MCF 10A (cell line): ENCODE measurements at regions of chr4 and their contacts with region 1.

Region 1: DNA sequence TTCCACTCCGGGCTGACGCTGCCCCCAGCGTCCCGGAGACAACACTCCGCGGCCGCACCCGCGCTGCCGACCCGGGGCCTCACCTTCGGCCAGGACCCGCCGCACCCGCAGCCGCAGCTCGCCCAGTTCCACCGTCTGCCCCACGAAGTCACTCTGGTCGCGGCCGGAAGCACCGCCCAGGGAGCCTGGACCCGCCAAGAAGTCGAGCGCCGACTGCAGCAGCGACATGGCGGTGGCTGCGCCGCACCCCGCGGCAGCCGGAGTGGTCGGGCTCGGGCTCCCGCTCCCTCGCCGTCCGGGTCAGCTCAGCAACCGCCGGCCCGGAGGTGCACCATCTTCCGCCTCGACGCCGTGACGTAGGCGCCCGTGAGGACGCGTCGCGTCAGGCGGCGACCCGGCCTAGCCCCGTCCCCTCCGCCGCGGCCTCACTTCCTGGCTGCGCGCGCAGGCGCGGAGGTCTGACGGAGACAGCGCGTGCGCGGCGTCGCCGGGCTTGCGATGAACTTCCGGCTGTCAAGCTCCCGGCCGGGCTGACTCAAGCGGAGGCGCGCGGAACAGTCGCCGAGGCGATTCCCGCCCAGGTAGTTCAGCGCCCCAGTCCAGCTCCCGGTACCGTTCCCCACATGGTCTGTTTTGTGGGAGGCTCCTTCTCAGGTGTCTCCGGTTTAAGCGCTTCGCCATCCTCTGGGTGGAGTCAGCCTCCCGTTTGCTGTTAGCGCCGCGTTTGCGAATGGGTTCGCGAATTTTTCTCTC is at the starts of genes GAK and TMEM175:
- DNase-seq: peak; percentile 95
- H3K4me3 Mint-ChIP-seq: peak within 1 kb of the TSS; percentile 93
- H3K27ac Mint-ChIP-seq: peak within 1 kb of the TSS; percentile 93
- H3K4me1 Mint-ChIP-seq: peaks cover 31% of the 10 kb centered on the region
- H3K27me3 Mint-ChIP-seq: no peaks in the 10 kb centered on the region
- CTCF ChIP-seq: no peak
- total RNA-seq, gene GAK: 70.4 and 72.9 TPM in 2 replicates
- total RNA-seq, gene TMEM175: 22.5 and 28.9 TPM in 2 replicates

Region 2: DNA sequence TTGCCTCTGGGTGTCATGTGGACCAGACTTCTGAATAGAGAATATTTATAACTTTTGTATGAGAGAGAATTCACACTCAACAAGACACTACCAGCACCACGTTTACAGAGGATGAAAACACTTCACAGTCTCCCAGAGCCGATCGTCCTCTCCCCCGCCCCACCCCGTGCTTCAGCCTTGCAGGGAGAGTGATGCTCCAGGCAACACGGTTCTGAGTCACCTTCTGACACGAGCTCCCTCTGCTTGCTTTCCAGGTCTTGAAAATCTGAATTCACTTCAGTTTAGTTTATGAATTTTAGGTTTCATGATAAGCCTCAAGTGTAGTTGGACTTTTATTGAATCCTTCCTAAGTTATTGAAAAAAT is 166.0 kb before region 1 on chr4:
- CTCF ChIA-PET with region 1: no interaction called
- POLR2A ChIA-PET with region 1: interaction called, 14 read pairs
- intact Hi-C with region 1: loop called (anchors 5 kb)
- DNase-seq: peak; percentile 81
- H3K4me3 Mint-ChIP-seq: no peak overlapping the region
- H3K27ac Mint-ChIP-seq: peak overlapping the region; percentile 49
- H3K4me1 Mint-ChIP-seq: peaks cover 18% of the 10 kb centered on the region
- H3K27me3 Mint-ChIP-seq: no peaks in the 10 kb centered on the region
- CTCF ChIP-seq: no peak

Region 3: GRCh38 chr4:781493-782216 is 150.5 kb before region 1 on chr4:
- CTCF ChIA-PET with region 1: no interaction called
- POLR2A ChIA-PET with region 1: interaction called, 16 read pairs
- intact Hi-C with region 1: no loop called
- DNase-seq: peak; percentile 99
- H3K4me3 Mint-ChIP-seq: peak overlapping the region; percentile 81
- H3K27ac Mint-ChIP-seq: peak overlapping the region; percentile 94
- H3K4me1 Mint-ChIP-seq: peaks cover 19% of the 10 kb centered on the region
- H3K27me3 Mint-ChIP-seq: no peaks in the 10 kb centered on the region
- CTCF ChIP-seq: no peak

Region 4: DNA sequence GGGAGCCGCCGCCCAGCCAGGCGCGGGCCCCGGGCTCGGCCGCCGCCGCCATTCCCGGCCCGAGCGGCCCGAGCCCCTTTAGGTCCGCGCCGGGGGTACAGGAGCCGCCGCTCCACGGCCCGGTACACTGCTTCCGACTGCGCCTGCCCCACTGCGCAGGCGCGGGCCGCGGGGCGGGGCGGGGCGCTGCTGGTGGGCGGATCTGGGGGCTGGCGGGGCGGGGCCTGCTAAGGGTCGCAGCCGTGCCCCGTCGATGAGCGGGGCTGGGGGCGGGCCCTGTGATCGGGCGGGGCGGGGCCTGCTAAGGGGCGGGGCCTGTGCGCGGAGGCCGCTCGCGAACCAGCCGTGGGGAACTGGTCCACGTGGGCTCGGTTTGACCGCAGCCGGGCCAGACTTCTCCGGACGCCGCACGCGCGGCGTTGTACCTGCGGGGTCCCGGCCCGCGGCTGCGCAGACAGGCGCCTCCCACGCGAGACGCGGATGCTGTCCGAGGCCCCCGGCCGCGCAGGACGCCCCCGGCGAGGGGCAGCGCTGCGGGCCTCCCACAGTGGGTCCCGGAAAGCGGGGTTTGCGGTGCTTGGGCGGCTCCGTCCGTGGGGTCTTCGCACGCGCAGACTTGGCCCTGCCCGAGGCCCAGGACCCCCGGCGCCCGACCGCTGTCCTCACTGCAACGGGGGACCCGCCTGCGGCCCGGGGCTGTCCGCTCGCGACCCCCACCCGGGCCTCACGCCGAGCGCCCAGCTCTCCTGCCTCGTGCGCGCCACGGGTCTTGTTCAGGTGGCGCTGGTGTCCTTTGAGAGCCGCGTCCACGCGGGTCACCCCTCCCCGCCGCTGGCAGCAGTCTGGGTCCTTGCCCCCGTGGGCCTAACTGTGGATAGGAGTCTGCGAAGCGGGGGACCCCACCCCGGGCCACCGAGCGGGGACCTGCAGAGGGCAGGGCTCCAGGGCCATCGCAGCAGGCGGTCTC is 41.6 kb after region 1 on chr4 and contains the start of gene DGKQ:
- CTCF ChIA-PET with region 1: no interaction called
- POLR2A ChIA-PET with region 1: interaction called, 10 read pairs
- intact Hi-C with region 1: no loop called
- DNase-seq: peak; percentile 83
- H3K4me3 Mint-ChIP-seq: peak within 1 kb of the TSS; percentile 66
- H3K27ac Mint-ChIP-seq: no peak within 1 kb of the TSS
- H3K4me1 Mint-ChIP-seq: peaks cover 5% of the 10 kb centered on the region
- H3K27me3 Mint-ChIP-seq: no peaks in the 10 kb centered on the region
- CTCF ChIP-seq: no peak
- total RNA-seq, gene DGKQ: 15.9 and 17.4 TPM in 2 replicates

Region 5: GRCh38 chr4:986879-987623 is 54.9 kb after region 1 on chr4 and contains the start of gene IDUA:
- CTCF ChIA-PET with region 1: interaction called, 5 read pairs
- POLR2A ChIA-PET with region 1: interaction called, 14 read pairs
- intact Hi-C with region 1: no loop called
- DNase-seq: peak; percentile 71
- H3K4me3 Mint-ChIP-seq: peak within 1 kb of the TSS; percentile 84
- H3K27ac Mint-ChIP-seq: no peak within 1 kb of the TSS
- H3K4me1 Mint-ChIP-seq: no peaks in the 10 kb centered on the region
- H3K27me3 Mint-ChIP-seq: no peaks in the 10 kb centered on the region
- CTCF ChIP-seq: peak; percentile 40
- total RNA-seq, gene IDUA: 35.0 and 35.1 TPM in 2 replicates